MCF 10A (cell line): ENCODE measurements at regions of chr20 and their contacts with region 1.

Region 1: DNA sequence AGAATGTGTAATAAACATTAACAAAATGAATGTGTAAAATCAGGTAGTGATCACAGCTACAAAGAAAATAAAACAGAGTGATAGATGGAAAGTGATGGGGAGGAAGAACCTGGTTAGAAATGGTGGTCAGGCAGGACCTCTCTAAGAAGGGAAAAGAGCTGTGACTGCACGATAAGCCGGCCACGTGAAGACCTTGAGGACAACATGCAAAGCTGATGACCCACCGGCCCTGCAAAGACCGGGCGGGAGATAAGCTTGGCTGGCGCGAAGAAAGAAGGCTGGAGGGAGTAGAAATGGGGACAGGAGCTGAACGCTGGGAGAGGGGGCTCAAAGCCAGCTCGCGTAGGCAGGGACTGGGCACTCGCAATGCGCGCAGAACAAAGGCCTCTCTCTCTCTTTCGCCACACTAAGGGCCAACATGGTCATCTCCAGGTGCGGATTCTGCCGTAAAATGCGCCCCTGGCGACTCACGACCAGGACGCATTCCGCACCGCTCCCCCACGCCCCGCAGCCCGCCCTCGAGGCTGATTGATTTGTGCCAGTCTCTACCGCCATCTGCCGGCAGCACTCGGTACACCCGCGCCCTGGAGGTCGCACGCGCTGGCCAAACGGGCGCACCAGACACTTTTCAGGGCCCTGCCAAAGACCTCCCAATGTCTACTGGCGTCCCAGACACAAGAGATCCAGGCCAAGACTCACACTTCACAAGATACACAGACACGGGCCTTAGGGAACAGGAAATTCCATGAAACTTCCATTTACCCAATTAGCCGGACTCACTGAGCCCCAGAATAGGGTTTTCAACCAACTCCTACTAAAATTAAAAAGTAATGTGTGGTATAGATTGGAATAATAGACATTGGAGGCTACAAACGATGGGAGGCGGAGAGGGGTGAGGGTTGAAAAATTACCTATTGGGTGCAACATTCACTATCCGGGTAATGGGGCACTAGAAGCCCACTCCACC is 9.4 kb downstream of the DEFB132 start:
- DNase-seq: peak; percentile 64
- H3K4me3 Mint-ChIP-seq: peak overlapping the region; percentile 61
- H3K27ac Mint-ChIP-seq: no peak overlapping the region
- H3K4me1 Mint-ChIP-seq: peaks cover 12% of the 10 kb centered on the region
- H3K27me3 Mint-ChIP-seq: no peaks in the 10 kb centered on the region
- CTCF ChIP-seq: peak; percentile 96

Region 2: GRCh38 chr20:208942-209566 is 57.8 kb before region 1 on chr20:
- CTCF ChIA-PET with region 1: interaction called, 18 read pairs
- POLR2A ChIA-PET with region 1: no interaction called
- intact Hi-C with region 1: loop called (anchors 1 kb)
- DNase-seq: peak; percentile 61
- H3K4me3 Mint-ChIP-seq: no peak overlapping the region
- H3K27ac Mint-ChIP-seq: no peak overlapping the region
- H3K4me1 Mint-ChIP-seq: no peaks in the 10 kb centered on the region
- H3K27me3 Mint-ChIP-seq: peaks cover 54% of the 10 kb centered on the region
- CTCF ChIP-seq: peak; percentile 62

Region 3: GRCh38 chr20:227439-228105 is 39.3 kb before region 1 on chr20:
- CTCF ChIA-PET with region 1: interaction called, 14 read pairs
- POLR2A ChIA-PET with region 1: interaction called, 4 read pairs
- intact Hi-C with region 1: no loop called
- DNase-seq: no peak
- H3K4me3 Mint-ChIP-seq: no peak overlapping the region
- H3K27ac Mint-ChIP-seq: no peak overlapping the region
- H3K4me1 Mint-ChIP-seq: no peaks in the 10 kb centered on the region
- H3K27me3 Mint-ChIP-seq: peaks cover 73% of the 10 kb centered on the region
- CTCF ChIP-seq: no peak

Region 4: GRCh38 chr20:251354-251753 is 15.5 kb before region 1 on chr20:
- CTCF ChIA-PET with region 1: interaction called, 46 read pairs
- POLR2A ChIA-PET with region 1: interaction called, 3 read pairs
- intact Hi-C with region 1: no loop called
- DNase-seq: no peak
- H3K4me3 Mint-ChIP-seq: no peak overlapping the region
- H3K27ac Mint-ChIP-seq: no peak overlapping the region
- H3K4me1 Mint-ChIP-seq: no peaks in the 10 kb centered on the region
- H3K27me3 Mint-ChIP-seq: peaks cover 30% of the 10 kb centered on the region
- CTCF ChIP-seq: no peak

Region 5: GRCh38 chr20:316316-317068 is 49.6 kb after region 1 on chr20:
- CTCF ChIA-PET with region 1: no interaction called
- POLR2A ChIA-PET with region 1: no interaction called
- intact Hi-C with region 1: no loop called
- DNase-seq: no peak
- H3K4me3 Mint-ChIP-seq: no peak overlapping the region
- H3K27ac Mint-ChIP-seq: no peak overlapping the region
- H3K4me1 Mint-ChIP-seq: no peaks in the 10 kb centered on the region
- H3K27me3 Mint-ChIP-seq: no peaks in the 10 kb centered on the region
- CTCF ChIP-seq: no peak

Region 6: DNA sequence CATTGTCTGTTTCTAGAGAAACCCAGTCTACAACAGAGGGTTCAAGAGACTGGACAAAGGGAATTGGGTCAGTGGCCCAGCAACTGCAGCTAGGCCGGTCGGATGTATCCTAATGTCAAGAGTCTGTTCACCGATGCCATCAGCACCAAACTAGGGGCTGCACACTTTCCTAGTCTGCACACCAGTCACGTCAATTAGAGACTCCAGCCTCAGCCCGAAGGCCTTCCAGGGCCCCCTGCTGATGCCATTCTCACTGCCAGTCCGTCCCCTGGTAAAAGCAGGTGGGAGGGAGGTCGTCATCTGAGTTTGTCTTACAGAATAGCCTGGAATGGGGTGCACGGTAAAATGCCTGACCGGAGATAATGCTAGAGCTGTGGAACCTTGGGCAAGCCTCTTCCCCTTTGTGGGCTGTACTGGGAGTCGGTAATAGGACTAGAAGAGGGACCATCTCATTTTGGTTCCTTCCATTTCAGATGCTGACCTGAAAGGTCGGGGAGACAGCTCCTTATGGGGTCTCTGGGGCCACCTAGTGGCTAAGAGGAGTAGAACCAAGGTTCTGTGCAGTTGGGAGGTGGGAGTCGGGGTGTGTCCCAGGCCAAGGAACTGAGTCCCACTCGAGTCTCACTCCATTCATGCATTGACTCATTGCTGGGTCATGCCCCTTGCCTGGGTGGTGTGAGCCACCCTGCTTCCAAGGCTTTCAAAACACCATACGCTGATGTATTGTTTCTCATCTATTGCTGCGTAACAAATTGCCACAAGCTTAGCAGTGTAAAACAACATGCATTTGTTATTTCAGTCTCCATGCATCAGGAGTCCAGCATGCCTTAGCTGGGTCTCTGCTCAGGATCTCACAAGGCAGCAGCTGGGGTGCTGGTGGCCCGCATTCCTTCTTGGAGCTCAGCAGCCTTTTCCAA is 63.6 kb after region 1 on chr20:
- CTCF ChIA-PET with region 1: interaction called, 20 read pairs
- POLR2A ChIA-PET with region 1: interaction called, 4 read pairs
- intact Hi-C with region 1: no loop called
- DNase-seq: peak; percentile 73
- H3K4me3 Mint-ChIP-seq: peak overlapping the region; percentile 45
- H3K27ac Mint-ChIP-seq: peak overlapping the region; percentile 55
- H3K4me1 Mint-ChIP-seq: peaks cover 24% of the 10 kb centered on the region
- H3K27me3 Mint-ChIP-seq: no peaks in the 10 kb centered on the region
- CTCF ChIP-seq: peak; percentile 86

Region 7: DNA sequence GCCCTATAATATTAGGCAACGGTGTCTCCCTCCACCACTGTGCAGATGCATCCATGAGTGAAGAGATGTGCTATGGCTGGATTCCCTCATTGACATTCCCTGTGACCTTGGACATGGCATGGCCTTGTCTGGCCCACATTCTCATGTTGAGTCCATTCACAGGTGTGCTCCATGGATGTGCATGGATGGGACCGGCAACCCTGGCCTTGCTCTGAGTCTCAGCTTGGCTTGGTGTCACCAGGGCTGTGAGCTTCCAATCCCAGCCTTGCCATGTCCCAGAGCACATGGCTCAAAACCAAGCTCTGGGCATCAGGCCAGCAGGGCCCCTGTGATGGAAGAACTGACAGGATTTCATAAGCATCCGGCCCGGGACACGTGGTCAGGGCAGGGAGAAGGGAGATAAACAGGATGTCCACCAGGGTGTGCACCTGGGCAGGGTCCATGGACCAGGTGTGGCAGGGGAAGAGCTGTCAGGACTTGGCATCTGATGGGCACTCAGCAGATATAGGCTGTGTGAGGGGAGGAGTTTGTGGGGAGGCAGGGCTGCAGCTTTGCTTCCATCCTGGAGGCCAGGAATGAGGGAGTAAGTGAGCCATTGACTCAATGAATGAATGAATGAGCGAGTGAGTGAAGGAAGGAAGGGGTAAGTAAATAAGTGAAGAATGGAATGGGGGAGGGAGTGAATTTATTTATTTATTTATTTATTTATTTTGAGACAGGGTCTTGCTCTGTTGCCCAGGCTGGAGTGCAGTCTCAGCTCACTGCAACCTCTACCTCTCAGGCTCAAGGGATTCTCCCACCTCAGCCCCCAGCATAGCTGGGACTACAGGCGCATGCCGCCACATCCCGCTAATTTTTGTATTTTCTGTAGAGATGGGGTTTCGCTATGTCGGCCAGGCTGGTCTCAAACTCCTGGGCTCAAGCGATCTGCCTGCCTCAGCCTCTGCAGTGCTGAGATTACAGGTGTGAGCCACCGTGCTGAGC is 95.7 kb after region 1 on chr20:
- CTCF ChIA-PET with region 1: no interaction called
- POLR2A ChIA-PET with region 1: no interaction called
- intact Hi-C with region 1: no loop called
- DNase-seq: peak; percentile 99
- H3K4me3 Mint-ChIP-seq: peak overlapping the region; percentile 64
- H3K27ac Mint-ChIP-seq: peak overlapping the region; percentile 67
- H3K4me1 Mint-ChIP-seq: peaks cover 60% of the 10 kb centered on the region
- H3K27me3 Mint-ChIP-seq: no peaks in the 10 kb centered on the region
- CTCF ChIP-seq: peak; percentile 73